ENCODE measurements at regions of chr9 and their contacts with region 1.

Region 1: DNA sequence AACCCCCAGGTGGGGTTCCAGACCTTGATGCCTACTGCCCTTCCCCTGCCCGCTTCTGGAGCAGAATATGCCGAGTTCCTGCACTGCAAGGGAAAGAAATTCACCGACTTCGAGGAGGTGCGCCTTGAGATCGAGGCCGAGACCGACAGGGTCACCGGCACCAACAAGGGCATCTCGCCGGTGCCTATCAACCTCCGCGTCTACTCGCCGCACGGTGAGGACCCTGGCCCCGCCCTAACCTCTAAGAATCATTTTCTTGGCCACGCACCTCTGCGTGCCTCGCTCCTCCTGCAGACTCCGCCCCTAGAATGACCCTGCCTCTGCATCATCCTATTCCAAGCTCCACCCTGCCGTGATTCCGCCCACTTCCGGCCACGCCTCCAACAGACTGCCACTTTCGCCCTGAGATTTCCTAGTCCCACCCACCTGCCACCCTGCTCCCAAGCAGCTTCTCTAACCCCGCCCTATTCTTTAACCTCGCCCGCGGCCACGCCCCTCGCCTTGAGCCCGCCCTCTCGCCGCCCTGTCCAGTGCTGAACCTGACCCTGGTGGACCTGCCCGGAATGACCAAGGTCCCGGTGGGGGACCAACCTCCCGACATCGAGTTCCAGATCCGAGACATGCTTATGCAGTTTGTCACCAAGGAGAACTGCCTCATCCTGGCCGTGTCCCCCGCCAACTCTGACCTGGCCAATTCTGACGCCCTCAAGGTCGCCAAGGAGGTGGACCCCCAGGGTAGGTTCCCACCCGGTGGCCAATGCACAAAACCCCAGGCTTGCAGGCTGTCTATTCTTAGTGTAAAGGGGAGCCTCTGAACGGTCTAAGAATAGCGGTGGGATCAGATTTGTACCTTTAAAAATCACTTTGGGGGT is 15.6 kb downstream of the DNM1 start:
- DNase-seq: peak; percentile 92
- H3K4me3 Mint-ChIP-seq: peak overlapping the region; percentile 75
- H3K27ac Mint-ChIP-seq: peak overlapping the region; percentile 4
- H3K4me1 Mint-ChIP-seq: peaks cover 7% of the 10 kb centered on the region
- H3K27me3 Mint-ChIP-seq: peaks cover 1% of the 10 kb centered on the region

Region 2: DNA sequence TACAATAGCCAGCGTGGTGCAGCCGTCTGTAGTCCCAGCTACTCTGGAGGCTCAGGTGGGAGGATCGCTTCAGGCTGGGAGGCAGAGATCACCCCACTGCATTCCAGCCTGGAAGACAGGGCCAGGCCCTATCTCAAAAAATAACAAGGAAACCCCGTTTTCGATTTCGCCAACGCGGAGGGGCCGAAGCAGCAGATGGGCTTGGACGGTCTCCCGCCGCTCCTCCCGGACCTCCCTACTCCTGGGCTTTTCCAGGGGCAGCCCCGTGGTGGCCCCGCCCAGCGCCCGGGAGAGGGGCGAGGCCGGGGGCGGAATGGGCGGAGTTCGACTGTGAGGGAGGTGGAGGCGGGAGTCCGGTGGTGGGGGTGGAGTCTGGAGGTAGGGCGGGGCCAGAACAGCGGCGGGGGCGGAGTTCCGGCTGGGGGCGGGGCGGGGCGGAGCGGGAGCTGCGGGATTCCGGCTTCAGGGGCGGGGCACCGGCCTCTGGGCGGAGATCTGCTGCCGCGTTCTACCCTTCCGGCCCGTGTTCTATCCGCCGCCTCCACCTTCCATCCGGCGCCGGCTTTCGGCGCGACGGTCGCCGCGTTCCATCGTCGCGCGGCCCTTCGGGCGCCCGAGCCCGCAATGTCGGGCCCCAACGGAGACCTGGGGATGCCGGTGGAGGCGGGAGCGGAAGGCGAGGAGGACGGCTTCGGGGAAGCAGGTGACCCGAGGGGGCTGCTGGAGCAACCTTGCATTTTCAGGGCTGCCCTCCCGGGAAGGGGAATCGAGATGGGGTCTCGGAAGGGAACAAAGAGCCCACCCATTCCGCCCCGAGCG is 58.8 kb before region 1 on chr9 and contains the start of gene BBLN:
- intact Hi-C with region 1: loop called (anchors 1 kb)
- DNase-seq: peak; percentile 88
- H3K4me3 Mint-ChIP-seq: peak within 1 kb of the TSS; percentile 84
- H3K27ac Mint-ChIP-seq: peak within 1 kb of the TSS; percentile 93
- H3K4me1 Mint-ChIP-seq: peaks cover 14% of the 10 kb centered on the region
- H3K27me3 Mint-ChIP-seq: peaks cover 2% of the 10 kb centered on the region
- total RNA-seq, gene BBLN: 97.3 and 106 TPM in 2 replicates

Region 3: DNA sequence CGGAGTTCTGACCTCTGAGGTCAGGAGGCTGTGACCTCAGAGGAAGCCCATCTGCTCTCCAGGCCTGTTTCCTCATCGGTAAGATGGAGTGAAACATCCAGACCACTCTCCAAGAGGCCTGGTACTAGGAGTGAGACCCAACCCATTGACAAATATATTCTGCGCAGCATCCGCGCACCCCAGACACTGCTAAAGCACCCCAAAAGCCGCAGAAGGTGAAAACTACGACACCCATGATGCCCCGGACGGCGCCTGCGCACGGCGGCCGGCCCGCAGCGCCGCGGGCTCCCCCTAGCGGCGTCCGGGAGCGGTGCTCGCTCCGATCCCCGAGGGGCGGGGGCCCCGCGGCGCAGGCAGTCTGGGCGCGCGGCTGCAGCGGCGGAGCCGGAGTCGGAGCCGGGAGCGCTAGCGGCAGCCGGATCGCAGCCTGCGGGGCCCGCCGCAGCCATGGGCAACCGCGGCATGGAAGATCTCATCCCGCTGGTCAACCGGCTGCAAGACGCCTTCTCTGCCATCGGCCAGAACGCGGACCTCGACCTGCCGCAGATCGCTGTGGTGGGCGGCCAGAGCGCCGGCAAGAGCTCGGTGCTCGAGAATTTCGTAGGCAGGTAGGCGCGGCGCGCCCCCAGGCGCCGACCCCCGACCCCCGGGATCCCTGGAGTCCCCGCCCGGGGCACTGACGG is 15.6 kb before region 1 on chr9 and contains the start of gene DNM1:
- intact Hi-C with region 1: loop called (anchors 1 kb)
- DNase-seq: peak; percentile 75
- H3K4me3 Mint-ChIP-seq: peak within 1 kb of the TSS; percentile 78
- H3K27ac Mint-ChIP-seq: peak within 1 kb of the TSS; percentile 83
- H3K4me1 Mint-ChIP-seq: peaks cover 21% of the 10 kb centered on the region
- H3K27me3 Mint-ChIP-seq: peaks cover 27% of the 10 kb centered on the region
- total RNA-seq, gene DNM1: 1.4 and 1.8 TPM in 2 replicates

Region 4: DNA sequence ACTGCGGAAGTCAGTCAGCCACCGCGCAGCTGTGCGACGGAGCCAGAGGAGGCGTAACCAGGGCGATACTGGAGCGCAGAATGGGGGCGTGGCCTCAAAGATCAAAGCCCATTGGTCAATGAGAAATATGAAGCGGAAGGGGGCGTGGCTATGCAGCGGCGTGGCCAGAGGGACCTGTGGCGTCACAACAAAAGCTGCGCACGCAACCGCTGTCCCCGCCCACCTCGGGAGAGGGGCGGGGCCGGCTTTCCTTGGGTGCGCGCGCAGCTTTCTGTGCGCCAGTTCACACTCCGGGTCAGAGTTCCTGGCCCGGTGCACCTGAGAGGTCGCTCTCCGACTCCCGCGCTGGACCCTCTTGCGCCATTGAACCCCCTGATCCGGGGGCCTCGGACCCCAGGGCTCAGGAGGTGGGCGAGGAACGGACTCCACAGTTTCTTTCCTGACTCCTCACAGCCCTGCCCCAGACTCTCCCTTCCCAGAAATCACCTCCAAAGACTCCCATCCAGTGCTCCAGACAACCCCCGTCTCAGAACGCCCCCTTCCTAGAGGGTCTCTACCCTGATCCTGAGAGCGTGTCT is 57.3 kb after region 1 on chr9 and contains the starts of genes GOLGA2 and SWI5:
- intact Hi-C with region 1: loop called (anchors 1 kb)
- DNase-seq: peak; percentile 100
- H3K4me3 Mint-ChIP-seq: peak within 1 kb of the TSS; percentile 98
- H3K27ac Mint-ChIP-seq: peak within 1 kb of the TSS; percentile 91
- H3K4me1 Mint-ChIP-seq: peaks cover 54% of the 10 kb centered on the region
- H3K27me3 Mint-ChIP-seq: no peaks in the 10 kb centered on the region
- total RNA-seq, gene GOLGA2: 52.3 and 53.0 TPM in 2 replicates
- total RNA-seq, gene SWI5: 10.4 and 13.3 TPM in 2 replicates

Region 5: DNA sequence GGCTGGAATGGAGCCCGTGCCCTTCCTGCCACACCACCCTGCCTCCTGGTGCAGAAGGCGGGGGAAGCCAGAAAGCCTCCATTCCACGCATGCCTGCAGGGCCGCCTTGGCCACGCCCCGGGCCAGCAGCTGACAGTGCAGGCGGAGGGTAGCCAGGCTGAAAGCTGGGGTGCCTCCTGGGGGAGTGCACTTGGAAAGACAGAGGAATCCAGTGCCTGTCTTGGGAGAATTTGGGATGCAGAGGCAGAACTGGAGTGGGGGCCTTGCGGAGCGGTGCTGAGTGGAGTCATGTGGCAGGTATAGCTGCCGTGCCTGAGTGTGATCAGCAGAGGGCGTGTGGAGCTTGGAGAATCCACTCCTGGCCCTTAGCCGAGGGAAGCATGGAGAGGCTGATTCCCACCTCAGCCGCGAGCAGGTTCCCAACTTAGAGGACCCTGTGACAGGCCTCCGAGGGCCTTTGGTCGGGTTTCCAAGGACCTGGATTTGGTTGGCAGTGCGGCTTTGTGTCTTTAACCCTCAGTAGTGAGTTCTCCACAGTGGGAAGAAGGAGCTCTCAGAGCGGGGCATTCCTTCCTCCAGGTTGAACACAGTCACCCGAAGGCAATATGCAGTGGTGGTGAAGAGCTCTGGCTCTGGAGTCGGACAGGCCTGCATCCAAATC is 143.4 kb after region 1 on chr9:
- intact Hi-C with region 1: no loop called
- DNase-seq: peak; percentile 52
- H3K4me3 Mint-ChIP-seq: peak overlapping the region; percentile 79
- H3K27ac Mint-ChIP-seq: peak overlapping the region; percentile 23
- H3K4me1 Mint-ChIP-seq: peaks cover 18% of the 10 kb centered on the region
- H3K27me3 Mint-ChIP-seq: no peaks in the 10 kb centered on the region

Region 6: GRCh38 chr9:128412120-128412790 is 193.5 kb after region 1 on chr9:
- intact Hi-C with region 1: no loop called
- DNase-seq: peak; percentile 22
- H3K4me3 Mint-ChIP-seq: no peak overlapping the region
- H3K27ac Mint-ChIP-seq: no peak overlapping the region
- H3K4me1 Mint-ChIP-seq: peaks cover 5% of the 10 kb centered on the region
- H3K27me3 Mint-ChIP-seq: peaks cover 44% of the 10 kb centered on the region

Region 7: DNA sequence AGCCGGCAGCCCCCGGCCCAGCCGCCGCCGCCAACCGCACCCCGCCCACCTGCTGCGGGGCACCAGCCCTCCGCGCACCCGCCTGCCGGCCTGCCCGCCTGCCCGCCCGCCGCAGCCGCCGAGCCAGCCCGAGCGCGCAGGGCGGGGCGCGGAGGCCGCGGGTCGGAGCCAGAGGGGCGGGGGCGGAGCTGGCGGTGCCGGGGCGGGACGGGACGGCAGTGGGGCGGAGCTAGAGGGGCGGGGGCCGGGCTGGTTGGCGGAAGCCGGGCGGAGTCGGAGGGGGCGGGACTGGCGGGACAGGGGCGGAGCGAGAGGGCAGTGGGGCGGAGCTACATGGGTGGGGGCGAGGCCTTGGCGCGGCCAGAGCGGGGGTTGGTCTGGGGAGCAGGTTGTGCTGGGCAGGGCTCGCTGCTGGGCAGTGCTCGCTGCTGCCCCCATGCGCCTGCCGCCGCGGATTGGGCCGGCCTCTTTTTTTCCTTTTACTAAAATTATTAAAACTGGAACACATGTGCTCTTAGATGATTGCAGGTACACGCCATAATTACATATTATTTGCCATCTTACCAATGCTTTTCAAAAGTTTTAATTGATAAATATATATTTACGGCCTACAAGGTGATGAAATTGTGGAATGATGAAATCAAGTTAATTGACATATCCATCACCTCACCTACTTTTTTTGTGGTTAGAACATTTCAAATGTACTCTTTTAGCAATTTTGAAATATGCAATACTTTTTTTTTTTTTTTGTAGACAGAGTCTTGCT is 809.6 kb after region 1 on chr9 and contains the start of gene SH3GLB2:
- intact Hi-C with region 1: loop called (anchors 1 kb)
- DNase-seq: peak; percentile 85
- H3K4me3 Mint-ChIP-seq: peak within 1 kb of the TSS; percentile 91
- H3K27ac Mint-ChIP-seq: peak within 1 kb of the TSS; percentile 80
- H3K4me1 Mint-ChIP-seq: peaks cover 24% of the 10 kb centered on the region
- H3K27me3 Mint-ChIP-seq: no peaks in the 10 kb centered on the region
- total RNA-seq, gene SH3GLB2: 71.1 and 74.8 TPM in 2 replicates

Measured in activated T-helper 1 cell treated with anti-CD3 and anti-CD28 coated beads, Interleukin-12 subunit alpha, Interleukin-12 subunit beta, Interleukin-2, Interleukin-4 antibody, amounts not matched to agents 30 ng/mL and 10 ng/mL and 1 ng/mL, durations not matched to agents 14 hours and 24 hours and 36 hours (primary cell).